Heart left ventricle (tissue), 16 donors: ENCODE measurements at regions of chr14 and their contacts with region 1.

Region 1: GRCh38 chr14:66359500-66359899 is 126.7 kb upstream of the CCDC196 start:
- DNase-seq: peak in 1 of 5 donors; percentile 11
- ATAC-seq: no peak
- H3K4me3 ChIP-seq: no peak overlapping the region
- H3K27ac ChIP-seq: no peak overlapping the region
- H3K4me1 ChIP-seq: no peaks in the 10 kb centered on the region
- H3K27me3 ChIP-seq: no peaks in the 10 kb centered on the region
- CTCF ChIP-seq: peak; percentile 55 to 83 (median 72)
- POLR2A ChIP-seq: no peak

Region 2: DNA sequence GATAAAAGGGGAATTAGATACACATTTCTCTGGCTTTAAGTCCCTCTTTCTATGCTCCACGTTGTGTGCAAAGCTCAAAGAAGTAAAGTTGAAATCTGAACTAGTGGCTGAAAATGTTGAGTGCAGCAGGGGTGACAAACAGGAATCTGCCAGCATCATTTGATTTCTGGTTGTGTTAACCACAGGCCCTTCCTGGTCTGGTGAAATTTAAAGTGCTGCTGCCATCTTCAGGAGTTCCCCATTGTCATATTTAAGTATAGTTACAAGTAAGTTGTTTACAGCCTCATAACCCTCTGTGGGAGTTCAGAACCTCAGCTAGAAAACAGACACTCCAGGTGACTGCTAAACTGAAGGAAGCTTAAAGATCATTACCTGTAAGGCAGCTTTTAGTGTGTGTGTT is 35.8 kb after region 1 on chr14:
- intact Hi-C with region 1: loop called in 7 of 10 experiments (anchors 5 kb)
- DNase-seq: no peak
- ATAC-seq: no peak
- H3K4me3 ChIP-seq: no peak overlapping the region
- H3K27ac ChIP-seq: no peak overlapping the region
- H3K4me1 ChIP-seq: peaks cover 0 to 4% (median 0%) of the 10 kb centered on the region in 12 donors
- H3K27me3 ChIP-seq: no peaks in the 10 kb centered on the region
- CTCF ChIP-seq: peak in 1 of 12 donors; percentile 8
- POLR2A ChIP-seq: no peak

Region 3: DNA sequence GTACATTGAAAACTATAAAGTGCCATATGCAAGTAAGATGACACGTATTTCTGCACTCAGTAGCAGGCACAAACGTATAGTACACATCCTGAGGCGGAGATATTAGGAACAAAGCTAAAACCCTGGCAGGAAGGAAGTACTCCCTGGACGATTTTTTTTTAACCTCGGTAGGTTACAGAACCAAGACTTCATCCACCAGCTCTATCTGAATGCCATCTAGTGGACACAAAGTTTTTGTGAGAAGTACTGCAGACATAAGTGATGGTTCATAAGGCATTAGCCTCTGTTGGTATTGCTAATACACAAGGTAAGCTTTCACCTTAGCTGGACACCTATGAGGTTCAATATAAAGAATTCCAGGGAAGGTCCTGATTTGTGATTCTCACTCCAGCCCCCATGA is 43.7 kb after region 1 on chr14:
- intact Hi-C with region 1: loop called in 9 of 10 experiments (anchors 2 to 5 kb)
- DNase-seq: no peak
- ATAC-seq: peak in 3 of 4 donors; percentile 37 to 50 (median 50)
- H3K4me3 ChIP-seq: no peak overlapping the region
- H3K27ac ChIP-seq: no peak overlapping the region
- H3K4me1 ChIP-seq: peaks cover 0 to 9% (median 0%) of the 10 kb centered on the region in 12 donors
- H3K27me3 ChIP-seq: no peaks in the 10 kb centered on the region
- CTCF ChIP-seq: peak in 9 of 12 donors; percentile 18 to 50 (median 46)
- POLR2A ChIP-seq: no peak

Region 4: DNA sequence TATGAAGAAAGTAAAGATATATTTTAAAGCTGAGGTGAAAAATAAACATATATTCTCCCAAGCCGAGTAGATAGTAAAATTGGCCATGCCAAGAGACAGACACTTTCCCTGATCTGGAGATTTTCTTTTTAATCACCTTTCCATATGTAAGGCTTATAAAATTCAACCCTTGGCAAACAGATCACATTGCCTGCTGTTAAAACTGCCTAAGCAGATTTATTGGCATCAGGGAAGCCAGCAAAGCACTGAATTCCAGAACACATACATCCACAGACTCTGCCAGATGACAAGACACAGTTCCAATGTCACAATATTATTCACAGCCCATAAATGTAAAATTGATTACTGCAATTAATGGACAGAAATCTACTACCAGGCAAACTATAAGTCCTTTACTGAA is 751.5 kb after region 1 on chr14:
- intact Hi-C with region 1: loop called in 1 of 10 experiments (anchors 5 kb)
- DNase-seq: no peak
- ATAC-seq: no peak
- H3K4me3 ChIP-seq: no peak overlapping the region
- H3K27ac ChIP-seq: no peak overlapping the region
- H3K4me1 ChIP-seq: no peaks in the 10 kb centered on the region
- H3K27me3 ChIP-seq: no peaks in the 10 kb centered on the region
- CTCF ChIP-seq: no peak
- POLR2A ChIP-seq: no peak

Region 5: GRCh38 chr14:67129768-67130167 is 770.3 kb after region 1 on chr14:
- intact Hi-C with region 1: loop called in 1 of 10 experiments (anchors 10 kb)
- DNase-seq: no peak
- ATAC-seq: no peak
- H3K4me3 ChIP-seq: no peak overlapping the region
- H3K27ac ChIP-seq: no peak overlapping the region
- H3K4me1 ChIP-seq: no peaks in the 10 kb centered on the region
- H3K27me3 ChIP-seq: no peaks in the 10 kb centered on the region
- CTCF ChIP-seq: no peak
- POLR2A ChIP-seq: no peak

Region 6: GRCh38 chr14:67285876-67286452 is 926.5 kb after region 1 on chr14:
- intact Hi-C with region 1: loop called in 1 of 10 experiments (anchors 5 kb)
- DNase-seq: no peak
- ATAC-seq: no peak
- H3K4me3 ChIP-seq: no peak overlapping the region
- H3K27ac ChIP-seq: no peak overlapping the region
- H3K4me1 ChIP-seq: no peaks in the 10 kb centered on the region
- H3K27me3 ChIP-seq: no peaks in the 10 kb centered on the region
- CTCF ChIP-seq: peak; percentile 50 to 78 (median 62)
- POLR2A ChIP-seq: no peak